ENCODE measurements at regions of chr4 and their contacts with region 1.

Region 1: DNA sequence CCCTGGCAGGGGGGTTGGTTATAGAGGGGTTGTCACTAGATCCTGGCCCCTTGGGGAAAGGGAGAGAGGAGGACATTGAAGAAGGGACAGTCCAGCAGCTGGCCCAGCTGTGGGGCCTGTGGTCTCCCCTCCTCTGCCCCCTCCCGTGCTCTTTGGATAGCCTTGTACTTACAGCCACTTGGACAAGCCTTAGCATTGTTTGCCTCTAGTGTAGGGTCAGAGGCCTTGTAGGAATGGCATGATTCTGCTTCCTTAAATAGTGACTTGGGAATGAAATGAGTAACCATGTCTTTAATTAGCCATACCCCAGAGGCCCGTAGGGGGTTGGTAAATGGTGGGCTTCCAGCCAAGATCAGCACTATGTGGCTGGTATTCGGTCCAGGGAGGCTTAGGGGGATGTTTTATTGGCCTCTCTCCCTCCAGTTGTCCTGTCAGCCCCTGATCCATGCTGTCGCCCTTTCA is 230.6 kb downstream of the PTTG2 start:
- DNase-seq: no peak
- H3K4me3 Mint-ChIP-seq: no peak overlapping the region
- H3K27ac Mint-ChIP-seq: no peak overlapping the region
- H3K4me1 Mint-ChIP-seq: peaks cover 2% of the 10 kb centered on the region
- H3K27me3 Mint-ChIP-seq: peaks cover 8% of the 10 kb centered on the region

Region 2: DNA sequence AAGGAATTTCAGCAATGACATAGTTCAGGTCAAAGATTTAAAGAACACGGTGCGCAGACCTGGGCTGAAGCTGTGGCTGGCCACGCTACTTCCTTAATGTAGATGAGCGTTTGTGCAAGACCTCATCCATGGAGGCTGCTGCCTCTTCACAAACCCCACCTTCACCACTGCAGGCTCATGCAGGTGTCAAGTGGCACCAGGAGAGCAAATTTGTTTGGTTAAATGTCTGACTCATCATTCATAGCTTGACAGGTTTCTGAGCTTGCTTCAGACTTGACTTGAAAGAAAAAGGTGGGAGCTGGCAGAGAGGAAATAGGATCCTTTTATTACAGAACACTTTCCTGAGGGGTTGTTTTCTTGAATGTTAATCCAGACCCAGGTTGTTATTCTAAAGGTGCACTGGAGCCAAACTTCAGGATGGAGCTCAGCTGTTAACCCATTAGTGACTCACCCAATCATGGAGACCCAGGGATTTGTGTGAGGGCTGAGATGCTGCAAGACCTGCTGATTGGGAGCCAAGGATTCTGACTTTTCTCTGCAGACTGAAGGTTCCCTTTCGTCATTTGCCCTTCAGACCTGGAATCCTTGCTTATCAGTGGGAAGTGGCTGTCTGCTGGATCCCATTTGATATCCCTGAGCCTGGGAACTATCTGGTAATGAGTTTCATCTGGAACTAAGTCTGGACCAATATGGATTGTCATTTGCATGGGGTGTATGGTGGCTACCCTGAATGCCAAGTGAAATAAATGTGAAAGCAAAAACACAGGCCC is 84.8 kb after region 1 on chr4:
- CTCF ChIA-PET with region 1: no interaction called
- intact Hi-C with region 1: loop called (anchors 10 kb)
- DNase-seq: no peak
- H3K4me3 Mint-ChIP-seq: no peak overlapping the region
- H3K27ac Mint-ChIP-seq: no peak overlapping the region
- H3K4me1 Mint-ChIP-seq: peaks cover 5% of the 10 kb centered on the region
- H3K27me3 Mint-ChIP-seq: no peaks in the 10 kb centered on the region

Region 3: GRCh38 chr4:38601244-38601897 is 410.6 kb after region 1 on chr4:
- CTCF ChIA-PET with region 1: no interaction called
- intact Hi-C with region 1: loop called (anchors 5 kb)
- DNase-seq: no peak
- H3K4me3 Mint-ChIP-seq: no peak overlapping the region
- H3K27ac Mint-ChIP-seq: no peak overlapping the region
- H3K4me1 Mint-ChIP-seq: peaks cover 20% of the 10 kb centered on the region
- H3K27me3 Mint-ChIP-seq: no peaks in the 10 kb centered on the region

Measured in activated naive CD4-positive, alpha-beta T cell treated with anti-CD3 and anti-CD28 coated beads for 36 hours (primary cell).